ENCODE measurements at regions of chr12 and their contacts with region 1.

Region 1: DNA sequence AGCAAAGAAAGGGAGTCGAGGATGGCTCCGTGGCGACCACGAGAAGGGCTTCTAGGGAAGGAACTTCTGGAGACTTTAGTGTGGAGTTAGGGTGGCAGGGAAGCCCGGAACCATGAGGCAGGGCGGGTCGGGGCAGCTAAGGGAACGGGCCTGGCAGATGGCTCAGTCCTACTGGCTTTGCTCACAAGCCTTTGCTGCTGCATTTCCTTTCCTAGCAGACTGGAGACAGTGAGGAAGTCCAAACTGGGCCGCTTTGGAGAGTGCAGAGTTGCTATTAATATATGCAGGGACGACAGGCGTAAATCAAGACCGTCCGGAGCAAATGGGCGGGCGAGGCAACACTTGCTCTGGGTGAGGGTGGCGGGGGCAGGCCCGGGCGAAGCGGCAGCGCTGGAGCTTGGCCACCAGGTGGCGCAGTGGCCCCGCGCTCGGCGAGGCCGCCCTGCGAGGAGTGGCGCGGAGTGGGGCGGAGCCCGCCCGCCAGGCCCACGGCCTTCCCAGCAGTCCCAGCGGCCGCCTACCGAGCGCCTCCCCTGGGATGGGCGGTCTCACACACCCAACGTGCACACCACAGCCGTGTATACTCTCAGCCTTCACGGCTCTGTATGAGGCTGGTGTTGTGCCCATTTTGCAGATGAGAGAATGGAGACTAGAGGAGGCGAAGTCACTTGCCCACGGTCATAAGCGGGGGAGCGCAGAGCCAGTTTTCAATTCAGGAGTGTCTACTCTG is 24.4 kb upstream of the LRTM2 start:
- DNase-seq: peak; percentile 90 to 96
- H3K4me3 ChIP-seq: peak overlapping the region; percentile 52 to 65
- H3K27ac ChIP-seq: peak overlapping the region; percentile 77
- H3K4me1 ChIP-seq: peaks cover 23% of the 10 kb centered on the region
- H3K27me3 ChIP-seq: no peaks in the 10 kb centered on the region
- CTCF ChIP-seq: peak; percentile 98 to 99 (median 99)
- POLR2A ChIP-seq: peak in 1 of 2 donors; percentile 53

Region 2: GRCh38 chr12:1644534-1645438 is 151.2 kb before region 1 on chr12:
- intact Hi-C with region 1: loop called (anchors 2 kb)
- DNase-seq: no peak
- H3K4me3 ChIP-seq: no peak overlapping the region
- H3K27ac ChIP-seq: no peak overlapping the region
- H3K4me1 ChIP-seq: peaks cover 14% of the 10 kb centered on the region
- H3K27me3 ChIP-seq: no peaks in the 10 kb centered on the region
- CTCF ChIP-seq: no peak
- POLR2A ChIP-seq: no peak

Region 3: GRCh38 chr12:1719139-1719538 is 76.8 kb before region 1 on chr12:
- intact Hi-C with region 1: no loop called
- DNase-seq: no peak
- H3K4me3 ChIP-seq: no peak overlapping the region
- H3K27ac ChIP-seq: no peak overlapping the region
- H3K4me1 ChIP-seq: peaks cover 13% of the 10 kb centered on the region
- H3K27me3 ChIP-seq: no peaks in the 10 kb centered on the region
- CTCF ChIP-seq: no peak
- POLR2A ChIP-seq: no peak

Region 4: GRCh38 chr12:2034633-2035430 is 238.9 kb after region 1 on chr12:
- intact Hi-C with region 1: loop called (anchors 10 kb)
- DNase-seq: no peak
- H3K4me3 ChIP-seq: peak overlapping the region; percentile 30 to 39
- H3K27ac ChIP-seq: no peak overlapping the region
- H3K4me1 ChIP-seq: peaks cover 11% of the 10 kb centered on the region
- H3K27me3 ChIP-seq: no peaks in the 10 kb centered on the region
- CTCF ChIP-seq: peak; percentile 83 to 89 (median 88)
- POLR2A ChIP-seq: no peak

Region 5: GRCh38 chr12:2583091-2583497 is 787.1 kb after region 1 on chr12:
- intact Hi-C with region 1: loop called (anchors 5 kb)
- DNase-seq: no peak
- H3K4me3 ChIP-seq: peak overlapping the region; percentile 6 to 29
- H3K27ac ChIP-seq: no peak overlapping the region
- H3K4me1 ChIP-seq: peaks cover 13% of the 10 kb centered on the region
- H3K27me3 ChIP-seq: no peaks in the 10 kb centered on the region
- CTCF ChIP-seq: peak; percentile 64 to 92 (median 89)
- POLR2A ChIP-seq: no peak

Measured in vagina (tissue), 2 donors.